MCF 10A (cell line): ENCODE measurements at regions of chr2 and their contacts with region 1.

Region 1: GRCh38 chr2:101697124-101698013 is at the start of gene MAP4K4:
- DNase-seq: peak; percentile 85
- H3K4me3 Mint-ChIP-seq: no peak within 1 kb of the TSS
- H3K27ac Mint-ChIP-seq: peak within 1 kb of the TSS; percentile 80
- H3K4me1 Mint-ChIP-seq: peaks cover 17% of the 10 kb centered on the region
- H3K27me3 Mint-ChIP-seq: no peaks in the 10 kb centered on the region
- CTCF ChIP-seq: peak; percentile 23
- total RNA-seq, gene MAP4K4: 143 and 162 TPM in 2 replicates

Region 2: DNA sequence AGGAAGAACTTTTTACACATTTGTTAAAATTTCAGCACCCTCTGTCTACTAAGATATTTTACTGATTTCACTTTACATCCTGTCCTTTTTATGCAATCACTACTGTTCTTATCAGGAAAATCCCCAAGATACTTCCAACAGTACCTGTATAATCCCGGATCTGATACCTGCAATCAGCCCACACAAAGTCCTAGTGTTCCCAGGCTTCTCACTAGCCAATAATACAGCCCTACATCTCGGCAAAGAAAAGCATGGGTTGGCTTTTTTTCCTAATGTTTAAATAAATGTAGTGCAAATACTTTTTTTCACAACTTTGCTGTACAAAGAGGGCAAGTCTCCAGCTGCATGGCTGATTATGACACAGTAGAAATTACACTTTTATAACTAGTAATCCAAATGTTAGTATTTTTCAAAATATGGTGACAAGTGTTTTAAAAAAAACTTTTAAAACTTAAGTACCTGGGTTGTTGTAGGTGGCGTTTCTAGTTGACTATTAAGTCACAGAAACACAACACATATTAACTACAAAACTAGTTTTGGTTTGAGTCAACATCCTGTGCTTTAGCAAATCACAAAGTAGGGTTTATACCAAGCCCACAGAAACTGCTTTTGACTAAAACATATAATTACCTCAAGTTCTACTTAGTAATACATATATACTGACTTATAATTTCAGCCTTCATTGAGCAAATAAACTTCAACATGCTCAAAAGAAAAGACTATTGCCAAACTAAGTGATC is 425.2 kb before region 1 on chr2:
- CTCF ChIA-PET with region 1: no interaction called
- POLR2A ChIA-PET with region 1: no interaction called
- intact Hi-C with region 1: no loop called
- DNase-seq: no peak
- H3K4me3 Mint-ChIP-seq: no peak overlapping the region
- H3K27ac Mint-ChIP-seq: no peak overlapping the region
- H3K4me1 Mint-ChIP-seq: no peaks in the 10 kb centered on the region
- H3K27me3 Mint-ChIP-seq: no peaks in the 10 kb centered on the region
- CTCF ChIP-seq: no peak

Region 3: GRCh38 chr2:101419096-101419663 is 278.2 kb before region 1 on chr2:
- CTCF ChIA-PET with region 1: interaction called, 6 read pairs
- POLR2A ChIA-PET with region 1: no interaction called
- intact Hi-C with region 1: loop called (anchors 1 kb)
- DNase-seq: peak; percentile 75
- H3K4me3 Mint-ChIP-seq: no peak overlapping the region
- H3K27ac Mint-ChIP-seq: no peak overlapping the region
- H3K4me1 Mint-ChIP-seq: peaks cover 6% of the 10 kb centered on the region
- H3K27me3 Mint-ChIP-seq: no peaks in the 10 kb centered on the region
- CTCF ChIP-seq: peak; percentile 67

Region 4: GRCh38 chr2:101710471-101711318 is 13.3 kb after region 1 on chr2:
- CTCF ChIA-PET with region 1: no interaction called
- POLR2A ChIA-PET with region 1: interaction called, 18 read pairs
- intact Hi-C with region 1: no loop called
- DNase-seq: no peak
- H3K4me3 Mint-ChIP-seq: no peak overlapping the region
- H3K27ac Mint-ChIP-seq: no peak overlapping the region
- H3K4me1 Mint-ChIP-seq: peaks cover 22% of the 10 kb centered on the region
- H3K27me3 Mint-ChIP-seq: no peaks in the 10 kb centered on the region
- CTCF ChIP-seq: no peak

Region 5: DNA sequence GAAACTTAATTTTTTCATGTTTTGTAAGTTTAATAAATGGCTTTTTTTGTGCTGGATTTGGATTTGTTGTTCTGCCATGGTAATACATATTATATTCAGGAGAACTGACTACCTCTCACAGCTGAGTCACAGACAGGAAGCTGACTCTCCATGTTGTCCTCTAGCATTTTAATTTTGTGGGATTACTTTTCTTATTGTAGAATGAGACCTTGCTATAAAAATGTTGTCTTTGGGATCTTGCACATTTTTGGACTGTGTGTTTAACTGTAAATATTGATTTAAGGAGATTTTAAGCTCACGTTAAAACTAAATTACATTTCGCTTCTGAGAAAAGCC is 49.0 kb after region 1 on chr2:
- CTCF ChIA-PET with region 1: interaction called, 9 read pairs
- POLR2A ChIA-PET with region 1: interaction called, 73 read pairs
- intact Hi-C with region 1: no loop called
- DNase-seq: peak; percentile 57
- H3K4me3 Mint-ChIP-seq: peak overlapping the region; percentile 29
- H3K27ac Mint-ChIP-seq: peak overlapping the region; percentile 92
- H3K4me1 Mint-ChIP-seq: peaks cover 56% of the 10 kb centered on the region
- H3K27me3 Mint-ChIP-seq: no peaks in the 10 kb centered on the region
- CTCF ChIP-seq: no peak

Region 6: DNA sequence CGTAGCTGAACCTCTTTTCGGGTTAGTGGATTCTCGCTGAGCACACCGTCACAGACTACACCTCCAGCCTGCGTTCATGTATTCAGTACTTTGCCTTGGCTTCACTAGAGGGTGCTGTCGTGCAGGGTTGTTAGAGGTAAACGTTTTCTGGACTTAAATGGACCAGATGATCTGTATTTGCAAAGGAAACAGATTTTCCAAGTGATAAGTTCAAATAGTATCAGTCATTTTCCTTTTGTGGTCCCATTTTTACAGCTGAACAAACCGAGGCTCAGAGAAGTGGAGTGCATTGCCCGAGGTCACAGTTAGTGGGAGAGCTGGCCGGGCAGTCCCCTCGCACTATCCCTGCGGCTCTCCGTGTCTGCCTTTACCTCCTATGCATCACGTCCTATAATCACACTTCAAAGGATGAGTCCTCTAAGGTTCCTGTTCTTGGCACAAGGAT is 126.0 kb after region 1 on chr2:
- CTCF ChIA-PET with region 1: interaction called, 19 read pairs
- POLR2A ChIA-PET with region 1: interaction called, 159 read pairs
- intact Hi-C with region 1: loop called (anchors 1 kb)
- DNase-seq: peak; percentile 89
- H3K4me3 Mint-ChIP-seq: peak overlapping the region; percentile 51
- H3K27ac Mint-ChIP-seq: peak overlapping the region; percentile 43
- H3K4me1 Mint-ChIP-seq: peaks cover 67% of the 10 kb centered on the region
- H3K27me3 Mint-ChIP-seq: no peaks in the 10 kb centered on the region
- CTCF ChIP-seq: peak; percentile 61